ACHN (cell line): ENCODE measurements at regions of chr7 and their contacts with region 1.

Region 1: GRCh38 chr7:74379938-74380337 is 73.8 kb upstream of the GTF2IRD1 start:
- DNase-seq: no peak

Region 2: DNA sequence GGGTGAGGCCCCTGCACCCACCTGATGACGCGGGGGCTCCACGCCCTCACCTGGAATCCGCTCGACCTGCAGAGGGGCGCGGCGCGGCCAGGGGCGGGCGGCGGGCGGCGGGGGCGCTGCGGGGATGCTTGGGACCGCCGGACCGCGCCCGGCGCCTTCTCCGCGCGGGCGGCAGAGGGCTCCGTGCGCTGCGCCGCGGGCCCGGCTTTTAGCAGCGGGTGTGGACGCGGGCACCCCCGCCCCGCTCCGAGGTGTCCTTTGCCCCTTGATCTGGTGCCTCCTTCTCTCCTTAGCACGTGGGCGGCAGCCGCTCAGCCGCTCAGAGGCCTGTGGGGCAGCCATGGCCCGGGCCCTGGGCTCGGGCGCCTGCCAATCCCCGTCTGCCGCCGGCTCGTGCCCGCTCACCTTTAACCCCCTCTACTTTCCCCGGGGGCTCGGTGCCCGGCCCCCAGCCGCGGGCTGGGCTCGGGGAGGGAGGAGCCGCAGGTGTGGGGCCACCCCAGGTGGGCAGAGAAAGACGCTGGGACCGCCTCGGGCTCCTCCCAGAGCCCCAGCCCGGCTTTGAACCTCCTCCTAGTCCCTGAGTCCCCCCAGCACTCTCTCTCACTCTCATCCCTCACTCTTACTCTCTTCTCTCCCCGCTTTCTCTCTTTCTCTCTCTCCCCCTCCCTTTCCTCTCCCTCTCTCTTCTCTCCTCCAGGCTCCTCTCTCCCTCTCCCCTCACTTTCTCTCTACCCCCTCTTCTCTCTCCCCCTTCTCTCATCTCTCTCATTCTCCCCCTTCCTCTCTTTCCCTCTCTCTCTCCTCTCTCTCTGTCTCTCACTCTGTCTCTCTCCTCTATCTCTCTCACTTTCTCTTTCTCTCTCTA is 732.0 kb before region 1 on chr7:
- in situ Hi-C with region 1: no loop called
- DNase-seq: peak; percentile 36

Region 3: DNA sequence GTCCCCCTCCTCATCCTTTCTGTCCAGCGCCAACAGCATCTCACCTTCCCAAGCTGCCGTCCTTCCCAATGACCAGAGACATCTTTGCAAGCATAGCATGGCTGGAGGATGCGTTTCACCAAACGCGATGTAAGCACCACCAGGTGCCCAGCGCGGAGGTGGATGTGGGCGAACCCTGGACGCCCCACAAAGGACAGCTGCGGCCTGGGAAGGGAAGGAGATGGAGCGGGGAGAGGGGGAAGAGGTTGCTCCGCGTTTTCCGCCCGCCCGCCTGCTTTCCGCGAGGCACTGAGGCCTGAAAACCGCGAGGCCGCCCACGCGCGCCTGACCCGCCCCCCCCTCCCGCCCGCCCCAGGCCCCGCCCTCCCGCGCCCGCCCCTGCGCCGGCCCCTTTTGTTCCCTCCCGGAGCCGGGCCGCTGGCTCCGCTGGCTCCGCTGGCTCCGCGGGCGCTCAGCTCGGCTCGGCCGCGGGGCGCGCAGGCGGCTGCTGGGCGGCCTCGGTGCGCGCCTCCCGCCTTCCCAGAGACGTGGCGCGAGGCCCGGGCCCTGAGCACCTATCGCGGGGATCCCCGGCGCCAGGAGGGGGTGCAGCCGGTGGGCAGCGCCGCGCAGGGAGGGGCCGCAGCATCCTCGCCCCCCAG is 90.8 kb before region 1 on chr7 and contains the start of gene CLIP2:
- in situ Hi-C with region 1: loop called (anchors 25 kb)
- DNase-seq: peak; percentile 84